Transverse colon (tissue), 4 donors: ENCODE measurements at regions of chr15 and their contacts with region 1.

Region 1: GRCh38 chr15:74752491-74753020 is 3.9 kb downstream of the CYP1A2 start:
- DNase-seq: no peak
- H3K4me3 ChIP-seq: no peak overlapping the region
- H3K27ac ChIP-seq: no peak overlapping the region
- H3K4me1 ChIP-seq: no peaks in the 10 kb centered on the region
- H3K27me3 ChIP-seq: no peaks in the 10 kb centered on the region
- CTCF ChIP-seq: no peak
- EP300 ChIP-seq: no peak
- POLR2A ChIP-seq: no peak

Region 2: DNA sequence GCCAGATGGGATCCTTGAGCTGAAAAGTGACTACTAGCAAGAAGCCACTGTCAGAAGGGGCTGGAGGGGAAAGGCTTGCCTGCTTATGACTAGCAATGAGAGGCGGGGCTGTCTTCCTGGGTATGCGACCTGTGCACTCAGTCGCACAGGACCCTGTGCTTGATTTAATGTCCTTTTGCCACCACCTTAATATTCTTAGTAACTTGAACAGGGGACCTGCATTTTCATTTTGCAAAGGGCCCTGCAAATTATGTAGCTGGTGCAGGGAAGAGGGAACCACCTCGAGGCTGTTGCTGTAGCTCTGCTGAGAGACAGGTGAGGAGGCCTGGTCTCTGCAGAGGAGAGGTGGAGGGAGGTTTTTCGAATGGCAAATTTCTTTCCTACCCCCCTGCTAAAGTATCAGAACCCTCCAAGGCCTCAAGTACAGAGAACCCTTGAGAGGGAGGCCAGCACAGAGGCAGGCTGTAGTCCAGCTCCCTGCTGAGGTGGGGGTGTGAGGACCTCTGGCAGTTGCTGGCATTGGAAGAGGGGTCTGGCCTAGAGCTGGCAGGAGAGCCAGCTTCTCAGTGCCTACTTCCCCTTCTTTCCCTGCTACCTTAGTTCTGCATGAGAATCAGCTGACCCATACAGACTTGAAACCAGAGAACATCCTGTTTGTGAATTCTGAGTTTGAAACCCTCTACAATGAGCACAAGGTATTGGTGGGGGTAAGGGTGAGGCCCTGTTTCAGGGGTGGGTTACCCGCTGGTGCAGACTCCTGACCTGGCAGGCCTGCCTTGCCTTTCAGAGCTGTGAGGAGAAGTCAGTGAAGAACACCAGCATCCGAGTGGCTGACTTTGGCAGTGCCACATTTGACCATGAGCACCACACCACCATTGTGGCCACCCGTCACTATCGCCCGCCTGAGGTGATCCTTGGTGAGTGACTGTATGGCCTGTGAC is 125.5 kb before region 1 on chr15:
- in situ Hi-C with region 1: no loop called
- intact Hi-C with region 1: loop called (anchors 5 kb)
- DNase-seq: no peak
- H3K4me3 ChIP-seq: no peak overlapping the region
- H3K27ac ChIP-seq: peak overlapping the region in 2 of 4 donors; percentile 7 to 30
- H3K4me1 ChIP-seq: no peaks in the 10 kb centered on the region
- H3K27me3 ChIP-seq: no peaks in the 10 kb centered on the region
- CTCF ChIP-seq: no peak
- EP300 ChIP-seq: no peak
- POLR2A ChIP-seq: no peak

Region 3: DNA sequence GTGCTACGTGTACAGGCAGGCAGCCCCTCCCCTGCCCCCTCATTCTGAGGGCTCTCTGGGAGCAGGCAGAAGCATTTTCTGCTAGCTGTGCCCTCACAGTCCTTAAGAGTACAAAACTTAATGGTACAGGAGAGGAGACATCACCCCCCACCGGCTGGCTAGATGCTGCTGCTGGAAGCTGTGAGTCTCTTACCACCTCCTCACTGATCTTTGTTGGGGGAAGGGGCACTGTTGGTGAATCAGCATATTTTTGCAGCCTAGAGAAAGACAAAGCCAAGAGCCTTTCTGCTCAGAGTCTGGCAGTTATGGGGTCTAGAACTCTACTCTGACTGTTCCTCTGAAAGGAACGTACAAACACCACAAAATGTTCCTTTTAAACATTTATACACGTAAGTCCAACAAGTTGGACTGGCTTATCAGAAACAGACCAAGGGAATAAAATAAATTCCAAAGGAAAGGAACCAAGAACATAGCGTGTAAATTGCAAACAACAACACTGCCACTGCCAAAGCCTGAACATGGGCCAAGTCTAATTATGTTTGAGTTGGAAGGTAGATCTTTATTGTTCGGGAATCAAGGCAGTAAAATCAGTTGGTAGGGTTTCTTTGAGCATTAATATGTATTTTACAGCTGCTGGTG is 109.7 kb before region 1 on chr15:
- in situ Hi-C with region 1: loop called in 1 of 4 experiments (anchors 10 kb)
- intact Hi-C with region 1: no loop called
- DNase-seq: peak; percentile 44
- H3K4me3 ChIP-seq: no peak overlapping the region
- H3K27ac ChIP-seq: peak overlapping the region; percentile 67 to 76 (median 70)
- H3K4me1 ChIP-seq: peaks cover 9 to 43% (median 27%) of the 10 kb centered on the region in 4 donors
- H3K27me3 ChIP-seq: no peaks in the 10 kb centered on the region
- CTCF ChIP-seq: no peak
- EP300 ChIP-seq: no peak
- POLR2A ChIP-seq: no peak